AG04450 (cell line): ENCODE measurements at regions of chr2 and their contacts with region 1.

Region 1: DNA sequence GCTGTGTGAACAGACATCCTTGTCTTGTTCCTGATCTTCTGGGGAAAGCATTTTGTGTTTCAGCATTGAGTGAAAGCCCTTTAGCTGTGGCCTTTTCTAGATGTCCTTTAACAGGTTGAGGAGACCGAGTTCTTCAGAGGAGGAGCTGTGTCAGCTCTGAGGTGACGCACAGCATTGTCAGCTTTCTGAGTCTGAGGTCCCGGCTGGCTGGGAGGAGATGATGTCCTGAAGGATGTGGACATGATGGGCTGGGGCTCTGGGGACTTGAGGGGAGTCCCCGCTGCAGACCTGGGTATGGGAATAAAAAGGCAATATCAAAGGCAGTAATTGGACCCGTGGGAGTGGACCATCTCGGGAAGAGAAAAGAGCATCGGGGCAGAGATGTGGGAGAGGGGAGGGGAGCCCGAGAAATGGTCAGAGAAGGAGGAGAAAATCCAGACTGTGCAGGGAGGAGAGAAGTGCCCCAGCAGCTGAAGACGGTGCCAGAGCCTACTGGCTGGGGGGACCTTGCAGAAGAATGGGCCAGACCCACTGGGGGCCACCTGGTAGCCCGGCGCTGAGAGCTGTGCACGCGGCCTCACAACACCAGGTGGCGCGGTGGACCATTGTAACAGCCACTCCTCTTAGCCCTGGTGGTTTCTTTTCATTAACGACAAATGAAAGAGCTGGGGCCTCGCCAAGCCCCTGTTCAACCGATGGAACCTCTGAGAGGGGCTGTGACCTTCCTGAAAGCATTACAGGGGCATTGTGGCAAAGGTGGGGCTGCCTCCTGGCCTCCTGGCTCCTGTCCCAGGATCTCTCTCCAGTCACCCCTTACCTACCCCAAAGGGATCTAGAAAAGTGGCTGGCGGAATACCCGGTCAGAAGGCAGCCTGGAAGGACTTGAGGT is 61.6 kb downstream of the ST3GAL5 start:
- DNase-seq: no peak
- H3K4me3 ChIP-seq: no peak overlapping the region
- H3K27ac ChIP-seq: no peak overlapping the region
- H3K27me3 ChIP-seq: peaks cover 5% of the 10 kb centered on the region
- CTCF ChIP-seq: peak; percentile 86

Region 2: DNA sequence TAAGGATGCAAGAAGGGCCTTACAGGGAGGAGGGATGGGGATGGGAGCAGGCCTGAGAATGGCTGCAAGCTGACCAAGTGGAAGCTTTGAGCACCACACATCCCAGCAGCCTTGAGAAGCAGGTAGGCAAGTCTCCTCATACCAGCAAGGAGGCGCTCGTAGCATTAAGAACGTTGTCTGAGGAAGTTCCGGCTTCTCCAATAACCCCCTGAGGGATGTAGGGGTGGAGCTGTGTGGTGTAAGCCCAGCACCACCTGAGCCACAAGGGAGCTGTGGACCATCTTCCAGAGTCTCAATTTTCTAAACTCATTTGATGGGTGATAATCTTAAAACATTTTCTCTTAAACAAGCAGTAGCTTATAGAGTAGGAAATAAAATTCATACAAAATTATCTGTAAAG is 10.9 kb after region 1 on chr2:
- CTCF ChIA-PET with region 1: interaction called, 10 read pairs
- POLR2A ChIA-PET with region 1: no interaction called
- DNase-seq: no peak
- H3K4me3 ChIP-seq: no peak overlapping the region
- H3K27ac ChIP-seq: no peak overlapping the region
- H3K27me3 ChIP-seq: no peaks in the 10 kb centered on the region
- CTCF ChIP-seq: no peak

Region 3: GRCh38 chr2:85878719-85879385 is 51.6 kb after region 1 on chr2:
- CTCF ChIA-PET with region 1: interaction called, 13 read pairs
- POLR2A ChIA-PET with region 1: no interaction called
- DNase-seq: no peak
- H3K4me3 ChIP-seq: no peak overlapping the region
- H3K27ac ChIP-seq: no peak overlapping the region
- H3K27me3 ChIP-seq: no peaks in the 10 kb centered on the region
- CTCF ChIP-seq: no peak

Region 4: GRCh38 chr2:85988175-85988913 is 161.1 kb after region 1 on chr2:
- CTCF ChIA-PET with region 1: no interaction called
- POLR2A ChIA-PET with region 1: no interaction called
- DNase-seq: no peak
- H3K4me3 ChIP-seq: no peak overlapping the region
- H3K27ac ChIP-seq: no peak overlapping the region
- H3K27me3 ChIP-seq: no peaks in the 10 kb centered on the region
- CTCF ChIP-seq: no peak

Region 5: GRCh38 chr2:86062043-86062442 is 234.8 kb after region 1 on chr2:
- CTCF ChIA-PET with region 1: interaction called, 15 read pairs
- POLR2A ChIA-PET with region 1: no interaction called
- DNase-seq: no peak
- H3K4me3 ChIP-seq: no peak overlapping the region
- H3K27ac ChIP-seq: no peak overlapping the region
- H3K27me3 ChIP-seq: no peaks in the 10 kb centered on the region
- CTCF ChIP-seq: no peak

Region 6: DNA sequence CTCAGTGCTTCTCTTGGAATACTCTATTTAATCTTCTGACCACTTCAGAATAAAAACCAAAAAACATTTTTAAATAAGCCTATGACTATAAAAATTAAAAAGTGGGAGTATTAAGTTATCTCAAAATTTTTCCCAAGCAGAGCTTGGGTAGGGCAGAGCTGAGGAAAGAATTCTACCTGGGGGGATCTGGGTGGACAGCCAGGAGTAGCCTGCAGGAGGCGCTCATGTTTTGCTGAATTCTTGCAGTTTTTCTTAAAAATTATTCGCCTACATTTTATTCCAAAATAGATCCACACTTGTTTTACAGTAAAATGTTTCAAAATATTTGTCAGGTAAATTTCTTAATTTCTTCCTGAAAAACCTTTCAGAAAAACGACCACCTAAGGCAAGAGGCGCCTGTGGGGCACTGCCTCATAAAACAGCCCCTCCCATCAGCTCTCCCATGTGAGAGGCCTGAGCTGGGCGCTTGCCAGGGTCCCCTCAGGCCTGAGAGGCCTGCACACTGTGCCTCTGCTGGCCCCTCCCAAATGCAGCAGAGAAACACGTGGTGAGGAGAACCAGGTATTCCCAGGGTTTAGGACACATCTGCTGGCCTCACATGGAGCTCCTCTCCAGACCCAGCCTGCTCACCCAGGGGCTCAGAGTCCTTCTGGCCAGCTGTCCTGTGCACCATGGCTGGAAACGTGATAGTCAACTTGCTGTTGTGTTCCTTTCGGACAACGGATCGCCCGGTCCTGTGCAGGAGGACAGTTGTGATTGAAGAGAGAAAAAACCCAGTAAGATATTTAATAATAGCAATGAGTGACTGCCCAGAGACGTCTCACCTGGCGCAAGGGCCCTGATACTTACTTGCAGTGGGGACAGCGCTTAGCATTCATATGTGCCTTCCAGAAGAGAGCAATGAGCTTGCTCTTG is 261.0 kb after region 1 on chr2:
- CTCF ChIA-PET with region 1: interaction called, 27 read pairs
- POLR2A ChIA-PET with region 1: no interaction called
- DNase-seq: no peak
- H3K4me3 ChIP-seq: no peak overlapping the region
- H3K27ac ChIP-seq: no peak overlapping the region
- H3K27me3 ChIP-seq: no peaks in the 10 kb centered on the region
- CTCF ChIP-seq: peak; percentile 36; the same call in 1 of the 2 replicates

Region 7: GRCh38 chr2:86123328-86123925 is 296.2 kb after region 1 on chr2:
- CTCF ChIA-PET with region 1: no interaction called
- POLR2A ChIA-PET with region 1: no interaction called
- DNase-seq: no peak
- H3K4me3 ChIP-seq: no peak overlapping the region
- H3K27ac ChIP-seq: no peak overlapping the region
- H3K27me3 ChIP-seq: no peaks in the 10 kb centered on the region
- CTCF ChIP-seq: no peak